Aorta (tissue), 5 donors: ENCODE measurements at regions of chr18 and their contacts with region 1.

Region 1: DNA sequence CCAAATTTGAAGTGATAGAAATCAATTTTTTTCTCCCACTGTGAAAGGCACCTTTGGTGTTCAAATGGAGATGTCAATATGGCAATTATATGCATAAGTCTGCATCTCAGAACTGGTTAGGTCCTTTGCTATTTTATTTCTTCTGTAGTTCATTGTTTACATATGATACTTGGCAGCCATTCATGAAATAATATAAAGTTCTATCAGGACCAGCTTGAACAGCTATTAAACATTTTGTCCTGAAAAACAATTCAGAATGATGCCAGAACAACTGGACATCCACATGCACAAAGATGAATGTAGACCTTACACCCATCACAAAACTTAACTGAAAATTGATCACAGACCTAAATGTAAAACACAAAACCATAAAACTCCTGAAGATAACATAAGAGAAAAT is 41.8 kb upstream of the ARHGAP28 start:
- DNase-seq: no peak
- ATAC-seq: no peak
- H3K4me3 ChIP-seq: no peak overlapping the region
- H3K27ac ChIP-seq: no peak overlapping the region
- H3K4me1 ChIP-seq: no peaks in the 10 kb centered on the region
- H3K27me3 ChIP-seq: peaks cover 0 to 1% of the 10 kb centered on the region in 2 donors

Region 2: GRCh38 chr18:6591491-6591890 is 96.2 kb before region 1 on chr18:
- intact Hi-C with region 1: no loop called
- DNase-seq: no peak
- ATAC-seq: no peak
- H3K4me3 ChIP-seq: no peak overlapping the region
- H3K27ac ChIP-seq: no peak overlapping the region
- H3K4me1 ChIP-seq: no peaks in the 10 kb centered on the region
- H3K27me3 ChIP-seq: no peaks in the 10 kb centered on the region

Region 3: GRCh38 chr18:6708890-6709289 is 21.2 kb after region 1 on chr18:
- intact Hi-C with region 1: loop called in 1 of 2 experiments (anchors 2 kb)
- DNase-seq: no peak
- ATAC-seq: no peak
- H3K4me3 ChIP-seq: no peak overlapping the region
- H3K27ac ChIP-seq: no peak overlapping the region
- H3K4me1 ChIP-seq: no peaks in the 10 kb centered on the region
- H3K27me3 ChIP-seq: no peaks in the 10 kb centered on the region